GM12878 (cell line): ENCODE measurements at regions of chr13 and their contacts with region 1.

Region 1: DNA sequence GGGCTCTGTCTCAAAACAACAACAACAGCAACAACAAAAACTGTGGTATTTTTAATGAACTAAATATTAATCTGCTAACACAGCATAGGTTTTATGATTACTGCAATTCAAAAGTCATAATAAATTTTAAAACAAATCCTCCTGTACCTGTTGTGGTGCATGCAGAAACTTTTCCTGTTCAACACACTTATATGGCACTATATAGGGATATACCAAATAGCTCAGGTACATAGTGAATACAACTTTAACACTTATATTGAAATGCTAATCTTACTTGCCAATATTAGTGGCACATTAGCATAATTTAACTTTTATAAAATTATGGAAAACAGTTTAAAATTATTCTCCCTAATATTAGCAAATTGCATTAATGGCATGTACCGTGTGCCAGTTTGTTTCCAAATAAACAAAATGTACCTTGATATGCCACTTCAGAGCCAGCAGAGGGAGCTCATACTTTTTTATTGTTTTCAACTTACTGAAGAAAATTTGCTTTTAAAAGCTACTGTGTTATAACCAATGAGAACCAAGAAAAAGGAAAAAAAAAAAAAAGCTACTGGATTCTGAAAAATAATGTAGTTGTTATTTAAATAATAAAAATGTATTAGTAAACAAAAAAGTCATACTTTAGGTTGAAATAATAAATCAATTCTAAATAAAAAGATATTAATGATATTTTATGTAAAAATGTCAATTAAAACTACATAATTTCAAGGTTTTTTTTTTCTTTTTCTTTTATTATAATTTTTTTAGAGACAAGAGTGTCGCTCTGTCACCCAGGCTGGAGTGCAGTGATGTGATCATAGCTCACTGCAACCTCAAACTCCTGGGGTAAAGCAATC is 18.0 kb upstream of the RBM26 start:
- DNase-seq: no peak
- ATAC-seq: peak; percentile 85
- H3K4me3 ChIP-seq: no peak overlapping the region
- H3K27ac ChIP-seq: no peak overlapping the region
- H3K4me1 ChIP-seq: no peaks in the 10 kb centered on the region
- H3K27me3 ChIP-seq: no peaks in the 10 kb centered on the region
- CTCF ChIP-seq: peak; percentile 46 to 71 (median 56); a peak in 5 of 6 replicates
- EP300 ChIP-seq: no peak
- POLR2A ChIP-seq: no peak
- RAD21 ChIP-seq: peak; percentile 90

Region 2: DNA sequence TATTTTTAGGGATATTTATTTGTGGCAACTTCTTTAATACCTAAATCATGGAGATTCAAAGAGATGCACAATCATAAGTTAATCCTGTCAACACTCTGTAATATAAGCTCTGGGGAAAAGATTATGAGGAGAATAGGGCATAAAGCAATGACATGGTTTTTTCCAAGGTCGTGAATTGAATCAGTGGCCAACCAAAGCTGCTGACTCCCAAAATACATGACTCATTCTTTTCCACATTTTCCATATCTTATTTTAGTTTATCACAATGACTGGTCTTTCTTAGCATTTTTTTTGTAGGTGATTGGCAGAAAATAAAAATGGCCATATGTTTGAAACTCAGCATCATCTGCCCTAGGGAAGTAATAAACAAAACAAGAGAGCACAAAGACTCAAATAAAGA is 10.5 kb after region 1 on chr13:
- CTCF ChIA-PET with region 1: interaction called, 19 read pairs
- POLR2A ChIA-PET with region 1: interaction called, 5 read pairs
- RAD21 ChIA-PET with region 1: interaction called, 4 read pairs
- SMC1A ChIA-PET with region 1: interaction called, 20 read pairs
- in situ Hi-C with region 1: no loop called
- intact Hi-C with region 1: no loop called
- DNase-seq: no peak
- ATAC-seq: no peak
- H3K4me3 ChIP-seq: no peak overlapping the region
- H3K27ac ChIP-seq: no peak overlapping the region
- H3K4me1 ChIP-seq: no peaks in the 10 kb centered on the region
- H3K27me3 ChIP-seq: no peaks in the 10 kb centered on the region; a peak in 1 of 4 replicates
- CTCF ChIP-seq: no peak
- EP300 ChIP-seq: no peak
- POLR2A ChIP-seq: no peak
- RAD21 ChIP-seq: no peak

Region 3: GRCh38 chr13:79468819-79469218 is 44.8 kb after region 1 on chr13:
- CTCF ChIA-PET with region 1: interaction called, 9 read pairs
- POLR2A ChIA-PET with region 1: no interaction called
- RAD21 ChIA-PET with region 1: no interaction called
- SMC1A ChIA-PET with region 1: interaction called, 23 read pairs
- in situ Hi-C with region 1: no loop called
- intact Hi-C with region 1: no loop called
- DNase-seq: no peak
- ATAC-seq: peak; percentile 92
- H3K4me3 ChIP-seq: no peak overlapping the region
- H3K27ac ChIP-seq: no peak overlapping the region
- H3K4me1 ChIP-seq: peaks cover 6% of the 10 kb centered on the region; the same call in 1 of the 2 replicates
- H3K27me3 ChIP-seq: no peaks in the 10 kb centered on the region
- CTCF ChIP-seq: no peak
- EP300 ChIP-seq: no peak; a peak in 1 of 4 replicates
- POLR2A ChIP-seq: no peak
- RAD21 ChIP-seq: no peak

Region 4: DNA sequence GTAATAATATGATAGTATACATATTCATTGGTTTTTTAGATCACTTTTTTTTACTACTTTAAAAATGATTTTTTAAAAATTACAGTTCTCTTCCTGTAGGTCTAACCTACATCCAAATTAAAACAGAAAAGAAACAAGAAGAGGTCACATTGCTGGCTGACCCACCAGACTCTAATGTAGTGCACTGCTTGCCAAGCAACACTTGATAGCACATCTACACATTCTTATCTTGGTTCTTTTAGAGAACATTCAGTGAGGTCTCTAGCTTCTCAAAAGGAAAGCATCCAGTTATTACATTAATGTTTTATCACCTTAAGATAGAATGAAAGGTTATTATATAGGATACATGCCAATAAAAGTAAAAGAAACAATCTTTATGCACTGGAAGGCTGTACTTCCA is 92.6 kb after region 1 on chr13:
- CTCF ChIA-PET with region 1: interaction called, 27 read pairs
- POLR2A ChIA-PET with region 1: no interaction called
- RAD21 ChIA-PET with region 1: interaction called, 10 read pairs
- SMC1A ChIA-PET with region 1: interaction called, 12 read pairs
- in situ Hi-C with region 1: no loop called
- intact Hi-C with region 1: no loop called
- DNase-seq: no peak
- ATAC-seq: no peak
- H3K4me3 ChIP-seq: no peak overlapping the region
- H3K27ac ChIP-seq: no peak overlapping the region
- H3K4me1 ChIP-seq: no peaks in the 10 kb centered on the region
- H3K27me3 ChIP-seq: no peaks in the 10 kb centered on the region
- CTCF ChIP-seq: no peak
- EP300 ChIP-seq: no peak
- POLR2A ChIP-seq: no peak
- RAD21 ChIP-seq: no peak

Region 5: DNA sequence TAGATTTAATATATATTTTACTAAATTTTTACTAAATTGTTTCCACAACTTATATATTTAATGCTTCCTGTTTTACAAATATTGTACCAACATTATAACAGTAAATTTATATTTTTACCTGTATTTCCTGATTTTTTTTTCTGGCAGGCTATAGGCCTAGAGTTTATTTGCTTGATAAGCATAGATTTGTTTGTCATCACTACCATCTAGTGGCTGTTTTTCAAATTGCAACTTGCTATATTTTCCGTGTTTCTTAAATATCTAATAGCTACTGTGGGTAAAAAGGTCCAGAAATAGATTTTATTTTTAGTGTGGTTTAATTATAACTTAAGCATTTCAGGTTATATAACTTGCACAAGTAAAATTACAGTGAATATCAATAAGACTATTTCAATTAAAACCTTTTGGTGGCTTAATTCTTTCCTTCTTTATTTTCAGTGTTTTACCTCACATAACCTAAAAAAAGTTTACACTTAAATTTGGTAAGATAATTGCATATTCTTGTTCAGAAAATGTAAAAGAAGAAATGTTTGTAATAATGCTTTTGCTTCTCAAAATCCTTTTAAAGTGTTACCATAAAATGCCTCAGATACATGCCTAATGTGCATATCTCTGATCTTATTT is 117.5 kb after region 1 on chr13:
- CTCF ChIA-PET with region 1: interaction called, 564 read pairs
- POLR2A ChIA-PET with region 1: interaction called, 6 read pairs
- RAD21 ChIA-PET with region 1: interaction called, 435 read pairs
- SMC1A ChIA-PET with region 1: interaction called, 427 read pairs
- in situ Hi-C with region 1: loop called (anchors 5 kb)
- intact Hi-C with region 1: loop called (anchors 1 kb)
- DNase-seq: peak; percentile 49
- ATAC-seq: peak; percentile 73
- H3K4me3 ChIP-seq: no peak overlapping the region
- H3K27ac ChIP-seq: no peak overlapping the region
- H3K4me1 ChIP-seq: no peaks in the 10 kb centered on the region
- H3K27me3 ChIP-seq: no peaks in the 10 kb centered on the region
- CTCF ChIP-seq: peak; percentile 57 to 69 (median 59)
- EP300 ChIP-seq: no peak
- POLR2A ChIP-seq: no peak
- RAD21 ChIP-seq: peak; percentile 95